ENCODE measurements at regions of chr2 and their contacts with region 1.

Region 1: DNA sequence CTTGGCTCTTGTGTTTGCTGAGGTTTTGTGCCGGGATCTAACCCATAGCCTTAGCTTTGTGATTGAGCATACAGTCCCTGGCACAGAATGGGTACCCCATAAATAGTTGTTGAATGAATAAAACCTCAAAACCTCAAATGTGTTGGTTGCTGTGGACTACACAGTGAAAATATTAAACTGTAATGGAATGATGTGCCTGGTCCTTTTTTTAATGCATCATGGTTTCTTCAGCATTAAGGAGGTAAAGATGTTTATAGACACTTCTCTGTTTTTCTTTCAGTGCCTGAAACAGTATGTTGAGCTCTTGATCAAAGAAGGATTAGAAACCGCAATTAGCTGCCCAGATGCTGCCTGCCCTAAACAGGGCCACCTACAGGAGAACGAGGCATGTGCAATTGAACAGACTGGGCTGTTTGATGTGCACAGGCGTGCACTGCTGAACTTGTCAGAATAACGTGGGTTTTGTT is 97.0 kb downstream of the RNF144A start:
- DNase-seq: peak in 10 of 14 experiments; percentile 11 to 67 (median 30)
- ATAC-seq: peak; percentile 96
- H3K4me3 ChIP-seq: no peak overlapping the region
- H3K4me3 Mint-ChIP-seq: no peak overlapping the region
- H3K27ac ChIP-seq: no peak overlapping the region
- H3K27ac Mint-ChIP-seq: peak overlapping the region; percentile 6
- H3K4me1 ChIP-seq: peaks cover 5% of the 10 kb centered on the region
- H3K4me1 Mint-ChIP-seq: peaks cover 44% of the 10 kb centered on the region
- H3K27me3 ChIP-seq: no peaks in the 10 kb centered on the region
- H3K27me3 Mint-ChIP-seq: no peaks in the 10 kb centered on the region
- CTCF ChIP-seq: peak; percentile 56

Region 2: GRCh38 chr2:6917071-6917760 is 97.0 kb before region 1 on chr2 and contains the start of gene RNF144A:
- CTCF ChIA-PET with region 1: interaction called, 3 read pairs
- POLR2A ChIA-PET with region 1: interaction called, 3 read pairs
- intact Hi-C with region 1: loop called in 1 of 2 experiments (anchors 5 kb)
- DNase-seq: peak; percentile 56 to 91 (median 69)
- ATAC-seq: peak; percentile 69
- H3K4me3 ChIP-seq: peak within 1 kb of the TSS; percentile 68
- H3K4me3 Mint-ChIP-seq: peak within 1 kb of the TSS; percentile 85
- H3K27ac ChIP-seq: peak within 1 kb of the TSS in 1 of 2 donors; percentile 29
- H3K27ac Mint-ChIP-seq: peak within 1 kb of the TSS; percentile 85
- H3K4me1 ChIP-seq: peaks cover 74% of the 10 kb centered on the region
- H3K4me1 Mint-ChIP-seq: peaks cover 82% of the 10 kb centered on the region
- H3K27me3 ChIP-seq: no peaks in the 10 kb centered on the region
- H3K27me3 Mint-ChIP-seq: no peaks in the 10 kb centered on the region
- CTCF ChIP-seq: peak; percentile 60
- total RNA-seq, gene RNF144A: 39.0 to 40.1 TPM

Region 3: DNA sequence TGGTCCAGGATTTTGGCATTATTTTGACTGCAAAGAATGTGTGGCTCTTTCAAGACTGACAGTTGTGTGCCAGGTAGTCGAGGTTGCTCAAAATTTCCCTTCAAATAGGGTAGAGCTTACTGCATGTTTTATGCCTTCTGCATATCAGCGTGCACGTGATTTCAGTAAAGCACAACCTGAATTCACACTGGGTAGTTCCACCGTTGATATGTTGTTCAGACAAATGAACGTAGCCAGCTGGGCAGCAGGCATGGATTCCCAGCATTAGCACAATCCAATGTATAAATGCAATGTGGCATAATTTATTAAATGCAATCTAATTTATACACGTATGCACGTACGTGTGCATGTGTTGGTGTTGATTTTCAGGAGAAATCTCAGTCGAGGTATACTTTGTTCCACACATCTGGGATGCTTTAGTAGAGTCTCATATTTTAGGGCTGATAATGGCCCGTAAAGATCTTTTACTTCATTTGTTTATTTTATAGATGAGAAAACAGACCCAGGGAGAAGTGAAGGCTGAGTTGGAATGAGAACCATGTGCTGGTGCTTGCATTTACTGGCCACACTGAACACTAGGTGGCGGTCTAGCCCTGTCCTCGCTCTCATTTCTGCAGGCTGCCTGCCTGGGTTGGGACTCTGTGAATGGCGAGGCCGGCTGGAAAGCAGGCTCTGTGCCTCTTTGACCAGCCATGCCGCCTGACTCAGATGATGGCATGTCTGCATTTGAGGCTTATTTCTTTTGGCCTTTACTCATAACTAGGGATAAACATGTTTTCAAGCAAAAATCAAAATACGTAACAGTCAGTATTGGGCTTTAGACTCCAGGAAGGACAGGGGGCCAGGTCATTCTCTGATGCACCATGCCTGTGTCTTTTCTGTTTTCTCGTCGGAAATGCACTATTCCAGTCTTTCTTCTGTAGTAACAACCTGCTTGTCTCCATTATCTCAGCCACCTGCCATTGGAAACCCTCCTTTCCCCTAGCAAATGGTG is 23.4 kb after region 1 on chr2:
- CTCF ChIA-PET with region 1: no interaction called
- POLR2A ChIA-PET with region 1: no interaction called
- intact Hi-C with region 1: no loop called
- DNase-seq: peak; percentile 26 to 74 (median 52)
- ATAC-seq: peak; percentile 94
- H3K4me3 ChIP-seq: no peak overlapping the region
- H3K4me3 Mint-ChIP-seq: no peak overlapping the region
- H3K27ac ChIP-seq: no peak overlapping the region
- H3K27ac Mint-ChIP-seq: peak overlapping the region; percentile 52
- H3K4me1 ChIP-seq: peaks cover 5% of the 10 kb centered on the region
- H3K4me1 Mint-ChIP-seq: peaks cover 12% of the 10 kb centered on the region
- H3K27me3 ChIP-seq: no peaks in the 10 kb centered on the region
- H3K27me3 Mint-ChIP-seq: no peaks in the 10 kb centered on the region
- CTCF ChIP-seq: peak; percentile 75

Region 4: DNA sequence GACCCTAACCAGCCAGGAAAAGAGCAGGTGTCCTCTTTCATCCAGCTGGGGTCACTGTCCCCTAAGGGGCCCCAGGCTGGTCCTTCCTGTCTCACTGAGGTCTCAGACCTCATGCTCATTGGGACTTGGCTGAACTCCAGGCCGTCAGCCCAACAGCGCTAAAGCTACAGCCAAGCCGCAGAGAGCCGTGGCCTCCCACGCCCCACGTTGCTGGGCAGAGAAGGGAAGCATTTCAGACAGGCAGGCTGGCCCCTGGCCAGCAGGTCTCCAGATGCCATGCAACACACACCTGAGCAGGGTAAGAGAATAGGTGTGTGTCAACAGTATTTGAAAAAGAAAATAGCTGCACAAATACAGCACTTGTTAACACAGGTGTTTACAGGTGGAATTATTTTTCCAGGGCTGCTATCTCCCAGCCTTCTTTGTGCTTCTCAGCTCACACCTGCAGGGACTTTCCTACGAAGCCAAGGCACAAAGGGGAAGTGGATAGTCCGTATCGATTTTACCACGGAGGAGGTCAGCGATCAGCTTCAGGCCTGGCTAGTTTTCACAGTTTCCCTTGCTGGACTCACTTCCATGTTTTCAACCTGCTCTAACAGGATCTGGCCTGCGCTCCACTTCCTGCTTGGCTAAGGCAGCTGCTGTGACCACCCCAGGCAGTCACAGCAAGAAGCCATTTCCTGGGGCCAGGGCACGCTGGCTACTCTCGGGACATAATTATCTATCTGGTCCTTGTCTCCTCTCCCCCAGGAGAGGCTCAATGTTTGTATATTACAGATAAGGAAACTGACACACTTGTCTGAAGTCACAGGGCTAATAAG is 1511.6 kb after region 1 on chr2:
- CTCF ChIA-PET with region 1: no interaction called
- POLR2A ChIA-PET with region 1: no interaction called
- intact Hi-C with region 1: no loop called
- DNase-seq: peak in 2 of 14 experiments; percentile 47 to 56
- ATAC-seq: no peak
- H3K4me3 ChIP-seq: no peak overlapping the region
- H3K4me3 Mint-ChIP-seq: no peak overlapping the region
- H3K27ac ChIP-seq: no peak overlapping the region
- H3K27ac Mint-ChIP-seq: no peak overlapping the region
- H3K4me1 ChIP-seq: peaks cover 48% of the 10 kb centered on the region
- H3K4me1 Mint-ChIP-seq: peaks cover 22% of the 10 kb centered on the region
- H3K27me3 ChIP-seq: no peaks in the 10 kb centered on the region
- H3K27me3 Mint-ChIP-seq: no peaks in the 10 kb centered on the region
- CTCF ChIP-seq: no peak

Measured in CD4-positive, alpha-beta T cell (primary cell).